GM23248 (cell line): ENCODE measurements at regions of chr9 and their contacts with region 1.

Region 1: GRCh38 chr9:38096238-38096805 is 27.3 kb upstream of the SHB start:
- DNase-seq: no peak
- H3K4me3 ChIP-seq: no peak overlapping the region
- H3K27ac ChIP-seq: no peak overlapping the region
- H3K4me1 ChIP-seq: no peaks in the 10 kb centered on the region
- H3K27me3 ChIP-seq: peaks cover 23% of the 10 kb centered on the region; the same call in 1 of the 2 replicates

Region 2: DNA sequence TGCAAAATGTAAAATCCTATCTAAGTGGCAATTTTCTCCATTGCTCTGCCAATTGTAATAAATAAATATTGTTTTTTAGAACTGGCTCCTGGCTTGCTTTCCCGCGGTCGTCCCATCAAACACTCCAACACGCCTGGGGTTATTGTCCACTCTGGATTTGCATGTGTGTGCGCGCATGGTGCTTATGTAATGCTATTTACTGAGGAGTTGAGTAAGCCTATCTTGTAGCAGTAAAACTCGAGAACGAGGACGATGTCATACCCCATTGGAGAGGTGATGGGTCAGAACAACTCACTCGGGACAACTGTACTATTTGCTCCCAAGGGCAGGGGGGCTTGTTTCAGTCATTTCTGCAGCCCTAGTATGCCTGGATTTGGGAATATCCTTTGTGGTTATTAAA is 1283.2 kb before region 1 on chr9:
- in situ Hi-C with region 1: no loop called
- DNase-seq: no peak
- H3K4me3 ChIP-seq: no peak overlapping the region
- H3K27ac ChIP-seq: no peak overlapping the region
- H3K4me1 ChIP-seq: no peaks in the 10 kb centered on the region
- H3K27me3 ChIP-seq: peaks cover 37% of the 10 kb centered on the region

Region 3: GRCh38 chr9:38130724-38131123 is 34.4 kb after region 1 on chr9:
- in situ Hi-C with region 1: loop called (anchors 5 kb)
- DNase-seq: no peak
- H3K4me3 ChIP-seq: no peak overlapping the region
- H3K27ac ChIP-seq: no peak overlapping the region
- H3K4me1 ChIP-seq: no peaks in the 10 kb centered on the region
- H3K27me3 ChIP-seq: peaks cover 38% of the 10 kb centered on the region